ENCODE measurements at regions of chr17 and their contacts with region 1.

Region 1: GRCh38 chr17:69141431-69142174 is at the start of gene ABCA6:
- DNase-seq: no peak
- H3K4me3 Mint-ChIP-seq: no peak within 1 kb of the TSS
- H3K27ac Mint-ChIP-seq: no peak within 1 kb of the TSS
- H3K4me1 Mint-ChIP-seq: no peaks in the 10 kb centered on the region
- H3K27me3 Mint-ChIP-seq: peaks cover 2% of the 10 kb centered on the region
- total RNA-seq, gene ABCA6: not detected

Region 2: GRCh38 chr17:69030145-69030544 is 111.5 kb before region 1 on chr17:
- CTCF ChIA-PET with region 1: no interaction called
- POLR2A ChIA-PET with region 1: no interaction called
- intact Hi-C with region 1: loop called (anchors 10 kb)
- DNase-seq: no peak
- H3K4me3 Mint-ChIP-seq: no peak overlapping the region
- H3K27ac Mint-ChIP-seq: no peak overlapping the region
- H3K4me1 Mint-ChIP-seq: no peaks in the 10 kb centered on the region
- H3K27me3 Mint-ChIP-seq: no peaks in the 10 kb centered on the region

Region 3: GRCh38 chr17:69047368-69048263 is 94.0 kb before region 1 on chr17:
- CTCF ChIA-PET with region 1: no interaction called
- POLR2A ChIA-PET with region 1: no interaction called
- intact Hi-C with region 1: no loop called
- DNase-seq: no peak
- H3K4me3 Mint-ChIP-seq: no peak overlapping the region
- H3K27ac Mint-ChIP-seq: no peak overlapping the region
- H3K4me1 Mint-ChIP-seq: peaks cover 3% of the 10 kb centered on the region
- H3K27me3 Mint-ChIP-seq: peaks cover 6% of the 10 kb centered on the region

Region 4: DNA sequence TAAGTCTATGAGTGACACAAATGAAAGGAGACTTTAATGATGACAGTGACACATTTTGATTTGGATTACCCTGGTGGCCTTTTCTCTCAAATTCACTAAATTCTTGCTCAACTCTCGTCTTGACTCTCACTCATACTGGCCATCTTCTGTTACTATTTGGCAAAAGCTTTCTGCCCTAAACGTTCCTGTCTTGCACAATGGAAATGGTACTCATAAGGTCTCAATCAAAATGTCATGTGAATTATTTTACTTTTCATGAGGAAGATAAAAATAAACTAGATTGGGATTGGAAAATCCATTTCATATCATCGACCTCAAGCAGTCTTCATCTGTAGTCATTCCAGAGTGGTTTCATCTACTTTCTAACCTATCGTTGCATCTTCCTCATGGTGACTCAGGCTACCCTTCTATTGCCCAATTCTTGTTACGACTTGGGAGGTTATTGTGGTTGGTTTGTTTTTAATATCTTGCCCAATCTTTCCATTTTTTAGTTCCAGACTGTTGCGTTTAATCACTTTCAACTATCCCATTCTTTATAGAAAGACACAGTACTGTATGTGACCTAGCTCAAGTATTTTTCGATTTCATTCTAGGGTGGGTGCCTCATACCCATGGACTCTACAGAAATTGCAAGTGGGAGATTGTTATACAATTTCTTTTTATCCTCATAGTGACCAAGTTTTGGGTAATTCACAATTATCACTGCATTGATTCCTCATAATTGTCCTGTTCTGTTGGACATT is 616.3 kb after region 1 on chr17:
- CTCF ChIA-PET with region 1: no interaction called
- POLR2A ChIA-PET with region 1: no interaction called
- intact Hi-C with region 1: no loop called
- DNase-seq: no peak
- H3K4me3 Mint-ChIP-seq: no peak overlapping the region
- H3K27ac Mint-ChIP-seq: no peak overlapping the region
- H3K4me1 Mint-ChIP-seq: no peaks in the 10 kb centered on the region
- H3K27me3 Mint-ChIP-seq: no peaks in the 10 kb centered on the region

Measured in activated CD4-positive, alpha-beta memory T cell treated with anti-CD3 and anti-CD28 coated beads for 36 hours (primary cell).